ENCODE measurements at regions of chr11 and their contacts with region 1.

Region 1: GRCh38 chr11:119316729-119317591 is at the start of gene MCAM:
- DNase-seq: peak; percentile 86 to 91
- ATAC-seq: peak; percentile 57
- H3K4me3 ChIP-seq: peak within 1 kb of the TSS; percentile 48 to 64
- H3K27ac ChIP-seq: peak within 1 kb of the TSS; percentile 96 to 97
- H3K4me1 ChIP-seq: no peaks in the 10 kb centered on the region
- H3K27me3 ChIP-seq: no peaks in the 10 kb centered on the region
- total RNA-seq, gene MCAM: 525 to 1,386 TPM

Region 2: GRCh38 chr11:119101759-119102423 is 215.1 kb before region 1 on chr11 and contains the start of gene DPAGT1:
- intact Hi-C with region 1: loop called in 1 of 2 experiments (anchors 1 kb)
- DNase-seq: peak; percentile 93 to 94
- ATAC-seq: peak; percentile 97
- H3K4me3 ChIP-seq: peak within 1 kb of the TSS; percentile 43 to 70
- H3K27ac ChIP-seq: peak within 1 kb of the TSS; percentile 29 to 95
- H3K4me1 ChIP-seq: no peaks in the 10 kb centered on the region
- H3K27me3 ChIP-seq: no peaks in the 10 kb centered on the region
- total RNA-seq, gene DPAGT1: 23.6 to 41.8 TPM

Region 3: GRCh38 chr11:119363851-119364590 is 47.1 kb after region 1 on chr11:
- intact Hi-C with region 1: no loop called
- DNase-seq: peak in 1 of 2 donors; percentile 89
- ATAC-seq: peak; percentile 71
- H3K4me3 ChIP-seq: peak overlapping the region in 1 of 2 donors; percentile 28
- H3K27ac ChIP-seq: no peak overlapping the region
- H3K4me1 ChIP-seq: no peaks in the 10 kb centered on the region
- H3K27me3 ChIP-seq: no peaks in the 10 kb centered on the region